ENCODE measurements at regions of chr6 and their contacts with region 1.

Region 1: GRCh38 chr6:44074439-44075136 is 52.7 kb downstream of the MRPL14 start:
- DNase-seq: peak; percentile 67
- H3K4me3 ChIP-seq: no peak overlapping the region
- H3K27ac ChIP-seq: no peak overlapping the region
- H3K4me1 ChIP-seq: peaks cover 11% of the 10 kb centered on the region
- H3K27me3 ChIP-seq: no peaks in the 10 kb centered on the region
- CTCF ChIP-seq: peak; percentile 87 to 93
- POLR2A ChIP-seq: no peak

Region 2: DNA sequence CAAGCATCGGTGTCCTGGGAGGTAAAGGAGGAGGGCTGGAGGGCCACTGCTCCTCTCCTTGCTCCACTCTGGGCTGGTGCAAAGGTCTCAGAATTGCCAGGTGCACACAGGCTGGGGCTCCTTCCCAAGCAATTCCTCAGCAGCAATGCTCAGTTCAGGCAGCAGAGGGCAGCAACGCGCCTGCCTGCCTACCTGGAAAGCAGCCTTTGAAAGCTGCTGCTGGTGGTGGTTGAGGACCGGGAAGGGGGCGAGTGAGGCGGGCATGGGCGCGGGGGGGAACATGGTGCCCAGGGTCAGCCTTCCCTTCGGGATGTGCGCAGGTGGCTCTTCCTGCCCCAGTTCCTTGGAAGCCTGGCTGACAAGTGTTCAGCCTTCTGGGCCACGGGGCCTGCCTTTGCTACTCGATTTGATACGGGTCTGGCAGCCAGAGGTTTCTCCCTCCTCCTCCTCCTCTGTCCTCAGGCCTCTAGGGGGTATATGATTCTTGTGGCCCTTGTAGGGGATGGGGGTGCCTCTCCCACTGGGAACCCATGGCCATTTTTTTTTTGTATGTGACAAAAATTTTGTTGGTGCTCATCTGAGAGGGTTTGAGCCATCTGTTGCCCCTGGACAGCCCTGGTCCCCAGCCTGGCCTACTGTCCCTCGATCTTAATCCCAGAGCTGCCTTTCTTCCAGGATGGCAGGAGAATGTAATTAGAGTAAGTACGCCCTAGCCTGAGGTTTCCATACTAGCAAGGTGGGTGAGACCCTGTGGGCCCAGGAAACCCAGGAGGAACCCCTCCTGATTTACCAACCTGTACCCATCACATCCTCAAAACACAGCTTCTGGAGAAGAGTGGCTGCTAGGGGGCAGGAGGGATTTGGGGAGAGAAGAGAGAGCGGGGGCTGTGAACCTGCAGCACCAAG is 407.1 kb before region 1 on chr6:
- CTCF ChIA-PET with region 1: interaction called, 177 read pairs
- POLR2A ChIA-PET with region 1: no interaction called
- dilution Hi-C with region 1: no loop called
- intact Hi-C with region 1: loop called (anchors 1 kb)
- DNase-seq: peak; percentile 81
- H3K4me3 ChIP-seq: no peak overlapping the region
- H3K27ac ChIP-seq: no peak overlapping the region
- H3K4me1 ChIP-seq: peaks cover 5% of the 10 kb centered on the region
- H3K27me3 ChIP-seq: no peaks in the 10 kb centered on the region
- CTCF ChIP-seq: peak; percentile 91 to 98
- POLR2A ChIP-seq: no peak

Region 3: GRCh38 chr6:43758617-43759050 is 316.0 kb before region 1 on chr6:
- CTCF ChIA-PET with region 1: interaction called, 71 read pairs
- POLR2A ChIA-PET with region 1: no interaction called
- dilution Hi-C with region 1: no loop called
- intact Hi-C with region 1: no loop called
- DNase-seq: peak; percentile 21
- H3K4me3 ChIP-seq: no peak overlapping the region
- H3K27ac ChIP-seq: no peak overlapping the region
- H3K4me1 ChIP-seq: peaks cover 5% of the 10 kb centered on the region
- H3K27me3 ChIP-seq: peaks cover 8 to 14% of the 10 kb centered on the region in 2 experiments
- CTCF ChIP-seq: peak; percentile 60 to 81
- POLR2A ChIP-seq: no peak

Region 4: DNA sequence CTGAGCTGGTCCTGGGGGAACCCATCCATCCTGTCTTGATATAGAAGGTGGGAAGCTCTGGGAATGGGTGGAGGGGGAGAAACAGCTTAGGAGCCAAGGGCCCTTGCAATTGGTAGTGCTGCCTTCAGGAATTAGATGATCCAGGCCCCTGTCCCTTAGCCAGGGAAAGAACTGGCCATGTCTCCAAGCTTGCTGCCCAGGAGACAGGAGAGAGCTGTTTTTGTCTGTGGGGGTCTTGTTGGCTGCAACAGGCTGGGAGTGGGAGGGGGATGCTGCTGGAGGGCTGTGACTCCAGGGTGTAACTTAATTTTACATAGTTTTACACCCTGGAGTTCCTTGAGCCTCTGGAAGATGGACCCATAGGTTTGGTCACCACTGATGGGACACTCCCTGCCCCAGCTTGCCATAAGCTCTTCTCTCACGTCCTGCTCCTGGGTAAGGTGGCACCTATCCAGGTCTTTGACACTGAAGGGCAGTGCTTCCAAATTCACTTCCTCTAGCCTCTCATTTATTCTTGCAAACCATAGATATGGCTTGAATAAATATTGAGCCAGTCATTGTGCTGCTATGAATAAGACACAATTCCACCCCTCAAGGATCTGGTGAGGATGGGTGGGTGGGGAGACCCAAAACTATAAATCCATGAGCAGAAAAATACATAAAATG is 287.8 kb before region 1 on chr6:
- CTCF ChIA-PET with region 1: interaction called, 14 read pairs
- POLR2A ChIA-PET with region 1: no interaction called
- dilution Hi-C with region 1: no loop called
- intact Hi-C with region 1: no loop called
- DNase-seq: no peak
- H3K4me3 ChIP-seq: no peak overlapping the region
- H3K27ac ChIP-seq: no peak overlapping the region
- H3K4me1 ChIP-seq: no peaks in the 10 kb centered on the region
- H3K27me3 ChIP-seq: peaks cover 0 to 1% of the 10 kb centered on the region in 2 experiments
- CTCF ChIP-seq: no peak
- POLR2A ChIP-seq: no peak

Region 5: GRCh38 chr6:43865932-43866645 is 208.5 kb before region 1 on chr6:
- CTCF ChIA-PET with region 1: no interaction called
- POLR2A ChIA-PET with region 1: no interaction called
- dilution Hi-C with region 1: no loop called
- intact Hi-C with region 1: no loop called
- DNase-seq: no peak
- H3K4me3 ChIP-seq: no peak overlapping the region
- H3K27ac ChIP-seq: no peak overlapping the region
- H3K4me1 ChIP-seq: no peaks in the 10 kb centered on the region
- H3K27me3 ChIP-seq: peaks cover 8 to 15% of the 10 kb centered on the region in 2 experiments
- CTCF ChIP-seq: no peak
- POLR2A ChIP-seq: no peak

Region 6: DNA sequence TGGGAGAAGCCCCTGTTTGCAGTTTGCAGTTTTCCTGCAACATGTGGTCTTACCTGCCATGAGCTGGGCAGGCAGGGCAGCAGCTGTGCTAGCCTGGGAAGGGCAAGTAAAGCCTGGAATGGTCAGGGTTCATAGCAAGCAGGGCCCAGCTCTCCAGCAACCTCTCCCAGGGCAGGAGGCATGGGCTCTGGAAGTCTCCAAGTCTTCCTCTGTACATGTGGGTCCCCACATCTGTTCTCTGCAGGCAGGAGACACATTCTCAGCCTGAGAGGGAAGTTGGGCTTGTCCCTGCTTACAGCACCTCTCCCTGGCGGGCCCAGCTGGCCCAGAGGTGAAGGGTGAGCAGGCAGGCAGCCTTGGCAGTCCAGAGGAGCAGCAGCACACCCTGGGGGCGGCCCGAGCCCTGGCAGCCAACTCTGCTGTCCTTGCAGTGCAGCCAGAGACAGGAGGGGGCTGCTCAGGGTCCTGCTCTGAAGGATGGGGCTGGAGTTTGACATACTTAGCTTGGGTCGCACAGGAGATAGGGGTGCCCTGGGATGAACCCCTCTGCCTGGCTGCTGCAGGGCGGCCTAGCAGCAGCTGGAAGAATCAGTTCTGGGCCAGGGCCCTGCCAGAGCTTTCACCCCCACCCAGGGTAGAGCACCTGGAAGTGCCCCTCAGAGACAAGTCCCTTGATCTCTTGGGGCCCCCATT is 123.4 kb before region 1 on chr6:
- CTCF ChIA-PET with region 1: interaction called, 11 read pairs
- POLR2A ChIA-PET with region 1: no interaction called
- dilution Hi-C with region 1: no loop called
- intact Hi-C with region 1: loop called (anchors 10 kb)
- DNase-seq: no peak
- H3K4me3 ChIP-seq: no peak overlapping the region
- H3K27ac ChIP-seq: no peak overlapping the region
- H3K4me1 ChIP-seq: no peaks in the 10 kb centered on the region
- H3K27me3 ChIP-seq: peaks cover 4 to 7% of the 10 kb centered on the region in 2 experiments
- CTCF ChIP-seq: peak; percentile 8 to 29
- POLR2A ChIP-seq: no peak

Region 7: GRCh38 chr6:44010411-44011349 is 63.9 kb before region 1 on chr6:
- CTCF ChIA-PET with region 1: interaction called, 16 read pairs
- POLR2A ChIA-PET with region 1: no interaction called
- dilution Hi-C with region 1: no loop called
- intact Hi-C with region 1: no loop called
- DNase-seq: no peak
- H3K4me3 ChIP-seq: no peak overlapping the region
- H3K27ac ChIP-seq: no peak overlapping the region
- H3K4me1 ChIP-seq: no peaks in the 10 kb centered on the region
- H3K27me3 ChIP-seq: peaks cover 0 to 4% of the 10 kb centered on the region in 2 experiments
- CTCF ChIP-seq: no peak
- POLR2A ChIP-seq: no peak

Region 8: GRCh38 chr6:46011241-46012085 is 1936.9 kb after region 1 on chr6:
- CTCF ChIA-PET with region 1: no interaction called
- POLR2A ChIA-PET with region 1: no interaction called
- dilution Hi-C with region 1: no loop called
- intact Hi-C with region 1: no loop called
- DNase-seq: peak; percentile 29
- H3K4me3 ChIP-seq: no peak overlapping the region
- H3K27ac ChIP-seq: no peak overlapping the region
- H3K4me1 ChIP-seq: peaks cover 13% of the 10 kb centered on the region
- H3K27me3 ChIP-seq: peaks cover 24 to 37% of the 10 kb centered on the region in 2 experiments
- CTCF ChIP-seq: no peak
- POLR2A ChIP-seq: no peak